Heart right ventricle (tissue), 16 donors: ENCODE measurements at regions of chr12 and their contacts with region 1.

Region 1: DNA sequence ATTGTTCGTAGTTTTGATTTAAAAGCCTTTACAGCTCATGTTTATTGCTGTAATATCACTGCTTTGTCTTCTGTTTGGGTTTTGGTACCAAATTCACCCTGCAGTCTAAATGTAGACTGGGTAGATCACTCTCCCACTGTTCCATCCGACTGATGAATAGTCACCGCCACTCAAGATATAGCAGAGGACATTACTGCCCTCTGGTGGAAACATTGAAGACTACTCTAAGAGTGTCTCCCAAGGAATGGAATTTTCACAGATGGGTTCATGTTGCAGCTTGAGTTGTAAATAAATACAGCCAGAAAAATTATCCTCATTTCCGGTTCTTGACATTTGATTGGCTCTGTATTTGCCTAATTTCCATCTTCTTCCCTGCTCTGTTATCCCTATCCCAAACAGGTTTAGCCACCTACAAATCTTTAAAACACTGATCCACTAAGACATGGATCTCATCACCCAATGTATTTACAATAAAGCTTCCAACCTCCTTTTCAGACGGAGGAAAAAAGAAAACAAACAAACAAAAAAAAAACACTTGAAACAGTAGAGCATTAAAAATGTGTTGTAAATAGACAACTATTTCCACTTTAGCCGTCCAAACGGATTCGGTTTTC is 198.3 kb upstream of the CPNE8 start:
- DNase-seq: peak in 1 of 2 donors; percentile 33
- ATAC-seq: peak; percentile 71 to 94 (median 87)
- H3K4me3 ChIP-seq: no peak overlapping the region
- H3K27ac ChIP-seq: no peak overlapping the region
- H3K4me1 ChIP-seq: no peaks in the 10 kb centered on the region
- H3K27me3 ChIP-seq: peaks cover 0 to 4% (median 0%) of the 10 kb centered on the region in 7 donors
- CTCF ChIP-seq: peak; percentile 68 to 90 (median 79)

Region 2: DNA sequence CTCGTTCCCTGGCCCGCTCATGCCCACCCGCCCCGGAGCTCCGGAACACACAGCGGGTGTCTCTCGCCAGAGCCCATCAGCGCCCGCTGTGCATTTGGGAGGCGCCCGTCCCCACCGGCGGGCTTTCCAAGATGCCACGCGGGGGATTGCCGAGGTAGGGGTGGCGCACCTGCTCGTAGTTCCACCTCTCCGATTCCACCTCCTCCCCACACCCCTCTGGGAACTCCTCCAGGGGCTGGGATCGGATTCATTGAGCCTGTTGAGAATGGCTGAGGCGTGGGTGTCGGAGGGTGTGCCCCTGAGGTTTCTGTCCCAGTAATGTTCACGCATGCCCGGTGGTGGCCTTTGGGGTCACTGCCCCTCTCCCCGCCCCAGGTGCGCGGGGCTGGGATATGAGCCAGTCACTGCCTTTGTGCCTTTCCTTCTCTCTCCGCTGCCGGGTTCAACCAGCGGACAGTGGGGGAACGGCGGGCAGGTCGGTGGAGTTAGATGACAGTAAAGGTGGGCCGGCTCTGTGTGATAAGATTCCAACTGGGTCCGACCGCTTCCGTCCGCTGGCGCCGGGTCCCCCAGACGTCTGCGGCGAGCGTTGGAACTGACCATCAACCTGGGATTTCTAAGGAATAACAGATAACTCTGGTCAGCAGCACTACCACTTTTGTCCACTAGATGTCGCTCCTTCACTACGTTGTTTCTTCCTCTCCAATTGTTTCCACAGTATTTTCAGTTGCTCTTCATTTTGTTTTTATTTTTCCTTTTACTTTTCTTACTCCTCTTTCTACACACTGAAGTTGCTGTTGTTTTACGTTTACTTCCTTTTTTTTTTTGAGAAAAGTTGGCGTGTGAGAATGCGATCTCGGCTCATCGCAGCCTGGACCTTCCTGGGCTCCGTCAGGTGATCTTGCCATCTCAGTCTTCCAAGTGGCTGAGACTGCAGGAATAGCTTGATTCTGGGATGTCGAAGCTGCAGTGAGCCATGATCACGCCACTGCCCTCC is 965.1 kb before region 1 on chr12:
- intact Hi-C with region 1: loop called in 2 of 10 experiments (anchors 10 kb)
- DNase-seq: peak in 1 of 2 donors; percentile 67
- ATAC-seq: peak; percentile 34 to 80 (median 64)
- H3K4me3 ChIP-seq: peak overlapping the region in 9 of 10 donors; percentile 15 to 43 (median 29)
- H3K27ac ChIP-seq: no peak overlapping the region
- H3K4me1 ChIP-seq: peaks cover 0 to 11% (median 7%) of the 10 kb centered on the region in 9 donors
- H3K27me3 ChIP-seq: peaks cover 0 to 27% (median 19%) of the 10 kb centered on the region in 7 donors
- CTCF ChIP-seq: peak; percentile 93 to 99 (median 96)

Region 3: DNA sequence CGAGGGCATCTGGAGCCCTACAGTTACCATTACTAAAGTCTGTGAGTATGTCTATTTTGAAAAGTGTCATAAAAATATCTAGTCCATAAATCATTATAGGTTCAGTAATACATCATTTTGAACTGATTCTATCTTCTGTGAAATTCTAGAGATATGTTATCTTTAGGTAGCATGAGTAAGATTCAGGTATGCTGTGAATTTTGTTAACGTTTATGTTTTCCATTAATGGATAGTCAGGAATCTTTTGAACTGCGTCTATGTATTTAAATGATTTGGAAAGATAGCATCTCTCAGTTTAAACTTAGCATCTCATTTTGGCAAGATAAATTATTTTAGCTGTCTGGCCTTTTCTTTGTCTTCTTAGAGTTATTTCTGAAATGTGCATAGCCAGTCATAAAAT is 778.8 kb before region 1 on chr12:
- intact Hi-C with region 1: loop called in 9 of 10 experiments (anchors 5 to 10 kb)
- DNase-seq: no peak
- ATAC-seq: no peak
- H3K4me3 ChIP-seq: no peak overlapping the region
- H3K27ac ChIP-seq: no peak overlapping the region
- H3K4me1 ChIP-seq: peaks cover 0 to 4% (median 0%) of the 10 kb centered on the region in 9 donors
- H3K27me3 ChIP-seq: no peaks in the 10 kb centered on the region
- CTCF ChIP-seq: no peak

Region 4: DNA sequence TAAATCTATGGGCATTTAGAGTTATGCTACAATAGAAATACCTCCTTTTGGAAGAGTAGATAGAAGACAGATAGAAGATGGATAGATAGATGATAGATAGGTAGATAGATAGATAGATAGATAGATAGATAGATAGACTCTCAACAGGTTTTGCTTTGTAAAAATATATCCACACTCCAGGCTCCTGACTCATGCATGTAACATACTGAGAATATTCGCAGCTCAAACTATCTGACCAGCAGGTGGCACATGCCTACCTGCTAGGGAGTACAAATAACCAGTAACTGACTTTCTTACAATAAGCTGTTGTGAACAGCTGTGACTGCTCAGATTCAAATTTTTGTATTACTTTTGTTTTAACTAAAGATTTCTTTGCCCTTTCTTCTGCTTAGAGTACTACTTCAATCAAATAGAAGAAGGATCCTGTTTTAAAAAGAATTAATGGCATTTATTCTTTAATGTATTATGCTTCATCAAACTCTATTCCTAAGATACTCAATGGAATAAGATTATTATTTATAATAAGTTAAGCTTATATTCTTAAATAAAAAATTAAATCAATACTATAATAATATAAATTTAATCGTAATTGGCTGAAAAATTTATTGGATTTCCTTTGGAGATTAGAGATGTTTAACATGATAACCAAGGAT is 182.5 kb before region 1 on chr12:
- intact Hi-C with region 1: loop called (anchors 1 to 5 kb)
- DNase-seq: peak in 1 of 2 donors; percentile 29
- ATAC-seq: peak in 3 of 8 donors; percentile 38 to 78 (median 42)
- H3K4me3 ChIP-seq: no peak overlapping the region
- H3K27ac ChIP-seq: no peak overlapping the region
- H3K4me1 ChIP-seq: no peaks in the 10 kb centered on the region
- H3K27me3 ChIP-seq: no peaks in the 10 kb centered on the region
- CTCF ChIP-seq: peak; percentile 32 to 69 (median 60)